CD4-positive, alpha-beta T cell (primary cell): ENCODE measurements at regions of chr7 and their contacts with region 1.

Region 1: GRCh38 chr7:38222481-38223096 is 44.5 kb downstream of the STARD3NL start:
- DNase-seq: peak in 5 of 14 experiments; percentile 7 to 82 (median 78)
- ATAC-seq: peak; percentile 92
- H3K4me3 ChIP-seq: no peak overlapping the region
- H3K4me3 Mint-ChIP-seq: no peak overlapping the region
- H3K27ac ChIP-seq: no peak overlapping the region
- H3K27ac Mint-ChIP-seq: peak overlapping the region; percentile 2
- H3K4me1 ChIP-seq: peaks cover 26% of the 10 kb centered on the region
- H3K4me1 Mint-ChIP-seq: peaks cover 11% of the 10 kb centered on the region
- H3K27me3 ChIP-seq: no peaks in the 10 kb centered on the region
- H3K27me3 Mint-ChIP-seq: no peaks in the 10 kb centered on the region
- CTCF ChIP-seq: peak; percentile 93

Region 2: DNA sequence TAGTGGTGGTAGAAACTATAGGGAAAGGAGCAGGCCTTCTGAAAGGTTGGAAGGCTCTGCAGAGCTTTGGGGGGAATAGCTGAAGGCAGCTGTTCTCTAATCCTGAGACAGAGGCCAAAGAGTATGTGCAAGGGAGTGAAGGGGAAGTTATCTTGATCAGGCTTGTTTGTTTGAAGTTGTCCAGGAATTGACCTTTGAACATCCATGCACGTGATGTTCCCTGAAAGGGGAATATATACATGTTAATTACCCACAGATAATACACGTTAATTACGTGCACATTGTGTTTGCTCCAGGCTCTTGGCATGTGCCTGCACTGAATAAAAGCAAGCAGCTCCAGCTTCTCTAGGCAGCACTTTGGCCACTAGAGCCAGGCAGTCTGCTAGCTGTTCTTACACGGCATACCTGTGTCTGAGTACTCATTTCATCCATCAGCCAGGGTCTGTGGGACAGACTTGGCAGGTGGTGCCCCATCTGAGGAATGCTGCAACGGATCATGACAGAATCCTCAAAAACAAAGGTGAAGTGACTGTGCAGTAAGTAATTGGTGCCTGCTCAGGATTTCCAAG is 62.5 kb before region 1 on chr7:
- CTCF ChIA-PET with region 1: no interaction called
- POLR2A ChIA-PET with region 1: no interaction called
- intact Hi-C with region 1: no loop called
- DNase-seq: no peak
- ATAC-seq: no peak
- H3K4me3 ChIP-seq: no peak overlapping the region
- H3K4me3 Mint-ChIP-seq: no peak overlapping the region
- H3K27ac ChIP-seq: no peak overlapping the region
- H3K27ac Mint-ChIP-seq: no peak overlapping the region
- H3K4me1 ChIP-seq: no peaks in the 10 kb centered on the region
- H3K4me1 Mint-ChIP-seq: no peaks in the 10 kb centered on the region
- H3K27me3 ChIP-seq: no peaks in the 10 kb centered on the region
- H3K27me3 Mint-ChIP-seq: peaks cover 16% of the 10 kb centered on the region
- CTCF ChIP-seq: no peak

Region 3: GRCh38 chr7:38318803-38319416 is 96.3 kb after region 1 on chr7:
- CTCF ChIA-PET with region 1: interaction called, 10 read pairs
- POLR2A ChIA-PET with region 1: no interaction called
- intact Hi-C with region 1: loop called (anchors 5 kb)
- DNase-seq: peak in 4 of 14 experiments; percentile 36 to 59 (median 56)
- ATAC-seq: peak; percentile 56
- H3K4me3 ChIP-seq: peak overlapping the region; percentile 7
- H3K4me3 Mint-ChIP-seq: peak overlapping the region; percentile 62
- H3K27ac ChIP-seq: peak overlapping the region; percentile 15 to 21
- H3K27ac Mint-ChIP-seq: peak overlapping the region; percentile 72
- H3K4me1 ChIP-seq: peaks cover 19% of the 10 kb centered on the region
- H3K4me1 Mint-ChIP-seq: peaks cover 29% of the 10 kb centered on the region
- H3K27me3 ChIP-seq: no peaks in the 10 kb centered on the region
- H3K27me3 Mint-ChIP-seq: no peaks in the 10 kb centered on the region
- CTCF ChIP-seq: peak; percentile 43